ENCODE measurements at regions of chr15 and their contacts with region 1.

Region 1: GRCh38 chr15:55627730-55628368 is 39.7 kb upstream of the PYGO1 start:
- DNase-seq: peak; percentile 96
- H3K4me3 ChIP-seq: no peak overlapping the region
- H3K27ac ChIP-seq: peak overlapping the region; percentile 73
- H3K4me1 ChIP-seq: peaks cover 7% of the 10 kb centered on the region
- H3K27me3 ChIP-seq: no peaks in the 10 kb centered on the region
- CTCF ChIP-seq: no peak

Region 2: DNA sequence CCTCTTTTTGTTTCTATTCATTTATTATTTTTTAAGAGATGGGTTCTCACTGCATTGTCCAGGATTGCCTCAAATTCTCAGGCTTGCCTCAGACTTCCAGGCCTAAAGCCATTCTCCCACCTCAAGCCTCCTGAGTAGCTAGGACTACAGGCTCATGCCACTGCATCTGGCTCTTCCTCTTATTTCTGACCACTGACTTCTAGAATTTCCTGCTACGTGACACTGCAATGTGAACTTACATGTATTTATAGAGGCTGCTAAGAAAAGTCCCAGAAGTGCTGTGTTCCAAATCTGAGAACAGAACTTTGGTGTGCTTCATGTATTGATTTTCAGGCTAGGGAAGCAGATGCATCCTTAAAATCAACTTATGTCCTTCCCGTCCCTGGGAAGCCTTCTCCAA is 838.5 kb before region 1 on chr15:
- CTCF ChIA-PET with region 1: no interaction called
- dilution Hi-C with region 1: no loop called
- in situ Hi-C with region 1: no loop called
- intact Hi-C with region 1: no loop called
- DNase-seq: no peak
- H3K4me3 ChIP-seq: no peak overlapping the region
- H3K27ac ChIP-seq: no peak overlapping the region
- H3K4me1 ChIP-seq: no peaks in the 10 kb centered on the region
- H3K27me3 ChIP-seq: no peaks in the 10 kb centered on the region
- CTCF ChIP-seq: no peak

Region 3: GRCh38 chr15:55588070-55588814 is 39.6 kb before region 1 on chr15 and contains the start of gene PYGO1:
- CTCF ChIA-PET with region 1: no interaction called
- dilution Hi-C with region 1: no loop called
- in situ Hi-C with region 1: no loop called
- intact Hi-C with region 1: loop called (anchors 5 kb)
- DNase-seq: peak; percentile 34
- H3K4me3 ChIP-seq: peak within 1 kb of the TSS; percentile 51 to 57 (median 53)
- H3K27ac ChIP-seq: no peak within 1 kb of the TSS
- H3K4me1 ChIP-seq: peaks cover 3% of the 10 kb centered on the region
- H3K27me3 ChIP-seq: peaks cover 18% of the 10 kb centered on the region
- CTCF ChIP-seq: no peak
- total RNA-seq, gene PYGO1: 1.0 to 5.8 TPM

Region 4: DNA sequence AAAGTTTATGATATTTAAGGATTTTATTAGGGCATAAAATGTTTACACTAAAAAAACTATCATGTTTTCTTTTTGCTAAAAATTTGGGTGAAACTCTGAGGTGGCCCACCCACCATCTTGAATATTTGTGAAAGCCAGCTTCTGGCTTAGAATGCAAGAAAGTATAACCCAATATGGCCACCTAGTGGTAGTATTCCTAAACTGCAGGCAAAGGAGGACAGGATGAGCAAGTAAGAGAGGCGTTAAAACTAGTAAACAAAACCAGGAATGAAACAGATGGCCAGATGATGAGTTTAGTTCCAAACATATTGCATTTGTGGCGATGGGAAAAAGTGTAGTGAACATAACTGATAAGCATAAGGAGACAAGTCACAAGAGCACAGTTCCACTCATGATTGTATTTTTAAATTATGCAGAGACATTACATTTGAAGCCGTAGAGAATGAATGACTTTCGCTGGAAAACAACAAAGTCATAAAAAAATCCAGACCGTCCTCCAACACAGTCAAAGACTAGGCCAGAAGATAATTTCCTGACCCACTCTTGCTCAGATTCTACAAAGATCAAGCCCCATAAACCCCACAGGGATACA is 218.4 kb after region 1 on chr15:
- CTCF ChIA-PET with region 1: interaction called, 12 read pairs
- dilution Hi-C with region 1: no loop called
- in situ Hi-C with region 1: no loop called
- intact Hi-C with region 1: no loop called
- DNase-seq: peak; percentile 65
- H3K4me3 ChIP-seq: no peak overlapping the region
- H3K27ac ChIP-seq: no peak overlapping the region
- H3K4me1 ChIP-seq: no peaks in the 10 kb centered on the region
- H3K27me3 ChIP-seq: no peaks in the 10 kb centered on the region
- CTCF ChIP-seq: peak; percentile 86 to 94

Measured in mammary epithelial cell (primary cell).